ENCODE measurements at regions of chr18 and their contacts with region 1.

Region 1: DNA sequence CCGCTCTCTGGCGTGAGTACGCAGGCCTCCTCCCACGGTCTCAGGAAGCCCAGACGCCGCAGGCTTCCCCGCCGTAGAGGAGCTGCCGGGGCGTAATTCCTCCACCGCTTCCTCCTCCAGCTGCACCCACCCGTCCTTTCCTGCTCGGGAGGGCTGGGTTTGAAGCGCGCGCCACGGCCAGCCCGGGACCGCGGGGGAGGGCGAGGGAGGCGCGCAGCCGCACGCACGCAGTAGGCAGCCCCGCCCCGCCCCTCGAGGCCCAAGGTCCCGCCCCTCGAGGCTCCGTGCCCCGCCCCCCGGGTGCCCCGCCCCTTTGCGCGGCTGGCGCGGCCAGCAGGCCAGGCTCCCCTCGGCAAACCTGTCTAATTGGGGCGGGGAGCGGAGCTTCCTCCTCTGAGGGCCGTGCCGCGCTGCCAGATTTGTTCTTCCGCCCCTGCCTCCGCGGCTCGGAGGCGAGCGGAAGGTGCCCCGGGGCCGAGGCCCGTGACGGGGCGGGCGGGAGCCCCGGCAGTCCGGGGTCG is at the start of gene MALT1:
- DNase-seq: peak; percentile 91 to 94 (median 93)
- H3K4me3 ChIP-seq: peak within 1 kb of the TSS; percentile 55 to 64
- H3K4me3 Mint-ChIP-seq: peak within 1 kb of the TSS; percentile 92 to 97 (median 96)
- H3K27ac ChIP-seq: peak within 1 kb of the TSS; percentile 78
- H3K27ac Mint-ChIP-seq: peak within 1 kb of the TSS; percentile 90 to 97 (median 96)
- H3K4me1 ChIP-seq: peaks cover 54% of the 10 kb centered on the region
- H3K4me1 Mint-ChIP-seq: peaks cover 45 to 65% (median 53%) of the 10 kb centered on the region in 4 donors
- H3K27me3 ChIP-seq: no peaks in the 10 kb centered on the region
- H3K27me3 Mint-ChIP-seq: no peaks in the 10 kb centered on the region
- total RNA-seq, gene MALT1: 90.4 to 96.7 TPM

Region 2: GRCh38 chr18:58466636-58467205 is 204.4 kb before region 1 on chr18:
- CTCF ChIA-PET with region 1: no interaction called
- POLR2A ChIA-PET with region 1: no interaction called
- intact Hi-C with region 1: no loop called
- DNase-seq: no peak
- H3K4me3 ChIP-seq: no peak overlapping the region
- H3K4me3 Mint-ChIP-seq: no peak overlapping the region
- H3K27ac ChIP-seq: no peak overlapping the region
- H3K27ac Mint-ChIP-seq: no peak overlapping the region
- H3K4me1 ChIP-seq: no peaks in the 10 kb centered on the region
- H3K4me1 Mint-ChIP-seq: no peaks in the 10 kb centered on the region
- H3K27me3 ChIP-seq: no peaks in the 10 kb centered on the region
- H3K27me3 Mint-ChIP-seq: peaks cover 8 to 14% of the 10 kb centered on the region in 2 donors

Region 3: GRCh38 chr18:58493516-58494253 is 177.5 kb before region 1 on chr18:
- CTCF ChIA-PET with region 1: no interaction called
- POLR2A ChIA-PET with region 1: no interaction called
- intact Hi-C with region 1: loop called (anchors 1 kb)
- DNase-seq: peak; percentile 60 to 73 (median 62)
- H3K4me3 ChIP-seq: no peak overlapping the region
- H3K4me3 Mint-ChIP-seq: peak overlapping the region in 3 of 8 donors; percentile 8 to 23 (median 21)
- H3K27ac ChIP-seq: no peak overlapping the region
- H3K27ac Mint-ChIP-seq: peak overlapping the region in 2 of 7 donors; percentile 23 to 32
- H3K4me1 ChIP-seq: peaks cover 7% of the 10 kb centered on the region
- H3K4me1 Mint-ChIP-seq: peaks cover 4 to 15% (median 5%) of the 10 kb centered on the region in 4 donors
- H3K27me3 ChIP-seq: no peaks in the 10 kb centered on the region
- H3K27me3 Mint-ChIP-seq: peaks cover 22% of the 10 kb centered on the region in 2 donors

Region 4: GRCh38 chr18:58605027-58606020 is 65.8 kb before region 1 on chr18:
- CTCF ChIA-PET with region 1: no interaction called
- POLR2A ChIA-PET with region 1: interaction called, 27 read pairs
- intact Hi-C with region 1: no loop called
- DNase-seq: peak; percentile 31 to 70 (median 52)
- H3K4me3 ChIP-seq: no peak overlapping the region
- H3K4me3 Mint-ChIP-seq: peak overlapping the region in 7 of 8 donors; percentile 9 to 74 (median 57)
- H3K27ac ChIP-seq: no peak overlapping the region
- H3K27ac Mint-ChIP-seq: peak overlapping the region; percentile 39 to 88 (median 64)
- H3K4me1 ChIP-seq: peaks cover 51% of the 10 kb centered on the region
- H3K4me1 Mint-ChIP-seq: peaks cover 26 to 62% (median 44%) of the 10 kb centered on the region in 4 donors
- H3K27me3 ChIP-seq: no peaks in the 10 kb centered on the region
- H3K27me3 Mint-ChIP-seq: no peaks in the 10 kb centered on the region

Region 5: GRCh38 chr18:58649966-58650816 is 21.0 kb before region 1 on chr18:
- CTCF ChIA-PET with region 1: interaction called, 6 read pairs
- POLR2A ChIA-PET with region 1: interaction called, 17 read pairs
- intact Hi-C with region 1: loop called (anchors 2 kb)
- DNase-seq: peak; percentile 45 to 70 (median 56)
- H3K4me3 ChIP-seq: peak overlapping the region in 1 of 2 donors; percentile 11
- H3K4me3 Mint-ChIP-seq: peak overlapping the region in 7 of 8 donors; percentile 17 to 78 (median 62)
- H3K27ac ChIP-seq: peak overlapping the region; percentile 16
- H3K27ac Mint-ChIP-seq: peak overlapping the region; percentile 54 to 94 (median 82)
- H3K4me1 ChIP-seq: peaks cover 53% of the 10 kb centered on the region
- H3K4me1 Mint-ChIP-seq: peaks cover 43 to 69% (median 57%) of the 10 kb centered on the region in 4 donors
- H3K27me3 ChIP-seq: no peaks in the 10 kb centered on the region
- H3K27me3 Mint-ChIP-seq: no peaks in the 10 kb centered on the region

Region 6: GRCh38 chr18:58699551-58699950 is 28.4 kb after region 1 on chr18:
- CTCF ChIA-PET with region 1: interaction called, 5 read pairs
- POLR2A ChIA-PET with region 1: interaction called, 36 read pairs
- intact Hi-C with region 1: no loop called
- DNase-seq: peak in 1 of 5 donors; percentile 24
- H3K4me3 ChIP-seq: no peak overlapping the region
- H3K4me3 Mint-ChIP-seq: no peak overlapping the region
- H3K27ac ChIP-seq: no peak overlapping the region
- H3K27ac Mint-ChIP-seq: no peak overlapping the region
- H3K4me1 ChIP-seq: peaks cover 56% of the 10 kb centered on the region
- H3K4me1 Mint-ChIP-seq: peaks cover 11 to 41% (median 33%) of the 10 kb centered on the region in 4 donors
- H3K27me3 ChIP-seq: no peaks in the 10 kb centered on the region
- H3K27me3 Mint-ChIP-seq: no peaks in the 10 kb centered on the region

Region 7: GRCh38 chr18:58761241-58761969 is 90.2 kb after region 1 on chr18:
- CTCF ChIA-PET with region 1: interaction called, 30 read pairs
- POLR2A ChIA-PET with region 1: interaction called, 25 read pairs
- intact Hi-C with region 1: loop called (anchors 1 kb)
- DNase-seq: no peak
- H3K4me3 ChIP-seq: no peak overlapping the region
- H3K4me3 Mint-ChIP-seq: peak overlapping the region in 5 of 8 donors; percentile 15 to 46 (median 37)
- H3K27ac ChIP-seq: no peak overlapping the region
- H3K27ac Mint-ChIP-seq: peak overlapping the region in 1 of 7 donors; percentile 75
- H3K4me1 ChIP-seq: peaks cover 19% of the 10 kb centered on the region
- H3K4me1 Mint-ChIP-seq: peaks cover 24 to 35% (median 27%) of the 10 kb centered on the region in 4 donors
- H3K27me3 ChIP-seq: no peaks in the 10 kb centered on the region
- H3K27me3 Mint-ChIP-seq: peaks cover 10 to 11% of the 10 kb centered on the region in 2 donors

Region 8: GRCh38 chr18:58819051-58819450 is 147.9 kb after region 1 on chr18:
- CTCF ChIA-PET with region 1: no interaction called
- POLR2A ChIA-PET with region 1: no interaction called
- intact Hi-C with region 1: no loop called
- DNase-seq: peak; percentile 53 to 77 (median 74)
- H3K4me3 ChIP-seq: no peak overlapping the region
- H3K4me3 Mint-ChIP-seq: peak overlapping the region in 6 of 8 donors; percentile 4 to 83 (median 21)
- H3K27ac ChIP-seq: no peak overlapping the region
- H3K27ac Mint-ChIP-seq: peak overlapping the region in 3 of 7 donors; percentile 49 to 69 (median 63)
- H3K4me1 ChIP-seq: peaks cover 14% of the 10 kb centered on the region
- H3K4me1 Mint-ChIP-seq: peaks cover 11 to 19% (median 13%) of the 10 kb centered on the region in 4 donors
- H3K27me3 ChIP-seq: peaks cover 10% of the 10 kb centered on the region
- H3K27me3 Mint-ChIP-seq: peaks cover 33 to 44% of the 10 kb centered on the region in 2 donors

Region 9: DNA sequence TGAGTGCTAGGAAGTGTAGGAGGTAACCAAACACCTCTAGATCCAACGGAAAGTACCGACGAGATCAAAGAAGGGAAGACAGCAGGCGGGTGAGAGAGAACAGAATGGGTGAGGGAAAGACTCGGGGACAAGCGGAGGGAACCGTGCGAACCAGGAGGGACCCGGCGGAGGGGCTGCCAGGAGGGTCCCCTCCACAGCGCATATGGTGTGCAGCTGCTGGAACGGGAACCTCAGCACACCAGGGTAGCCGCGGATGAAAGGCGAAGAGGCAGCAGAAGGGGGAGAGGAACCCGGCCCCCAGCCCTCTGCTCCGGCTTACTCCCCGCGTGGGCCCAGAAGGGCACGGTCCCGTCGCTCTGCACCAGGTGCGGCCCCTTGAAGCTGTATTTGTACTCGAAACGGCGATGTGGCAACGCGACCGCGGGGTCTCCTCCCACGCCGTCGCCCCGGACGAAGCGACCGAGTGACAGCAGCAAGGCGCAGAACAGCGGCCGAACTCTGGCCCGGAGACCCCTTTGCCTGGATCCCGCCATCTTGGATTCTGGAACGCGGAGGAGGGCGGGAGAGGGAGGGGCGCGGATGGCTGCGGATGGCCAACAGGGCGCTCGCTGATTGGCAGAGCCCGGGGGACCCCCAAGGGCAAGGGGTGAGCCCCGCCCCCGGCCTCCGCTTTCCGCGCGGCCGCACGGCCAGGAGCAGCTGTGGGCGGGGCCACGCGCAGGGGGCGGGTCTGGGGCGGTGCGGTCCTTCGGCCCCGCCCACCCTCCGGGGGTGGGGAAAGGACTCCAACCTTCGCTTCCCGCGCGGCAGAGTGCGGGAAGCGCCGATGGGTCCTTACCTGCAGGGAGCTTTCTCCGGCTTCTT is 687.8 kb after region 1 on chr18 and contains the start of gene LMAN1:
- CTCF ChIA-PET with region 1: no interaction called
- POLR2A ChIA-PET with region 1: no interaction called
- intact Hi-C with region 1: loop called (anchors 5 kb)
- DNase-seq: peak; percentile 85 to 88 (median 87)
- H3K4me3 ChIP-seq: peak within 1 kb of the TSS; percentile 76 to 92
- H3K4me3 Mint-ChIP-seq: peak within 1 kb of the TSS; percentile 91 to 100 (median 98)
- H3K27ac ChIP-seq: peak within 1 kb of the TSS; percentile 95
- H3K27ac Mint-ChIP-seq: peak within 1 kb of the TSS; percentile 91 to 99 (median 97)
- H3K4me1 ChIP-seq: peaks cover 38% of the 10 kb centered on the region
- H3K4me1 Mint-ChIP-seq: peaks cover 23 to 52% (median 35%) of the 10 kb centered on the region in 4 donors
- H3K27me3 ChIP-seq: no peaks in the 10 kb centered on the region
- H3K27me3 Mint-ChIP-seq: peaks cover 0 to 2% of the 10 kb centered on the region in 2 donors
- total RNA-seq, gene LMAN1: 55.7 to 59.6 TPM